HEK293 (cell line): ENCODE measurements at regions of chr2 and their contacts with region 1.

Region 1: DNA sequence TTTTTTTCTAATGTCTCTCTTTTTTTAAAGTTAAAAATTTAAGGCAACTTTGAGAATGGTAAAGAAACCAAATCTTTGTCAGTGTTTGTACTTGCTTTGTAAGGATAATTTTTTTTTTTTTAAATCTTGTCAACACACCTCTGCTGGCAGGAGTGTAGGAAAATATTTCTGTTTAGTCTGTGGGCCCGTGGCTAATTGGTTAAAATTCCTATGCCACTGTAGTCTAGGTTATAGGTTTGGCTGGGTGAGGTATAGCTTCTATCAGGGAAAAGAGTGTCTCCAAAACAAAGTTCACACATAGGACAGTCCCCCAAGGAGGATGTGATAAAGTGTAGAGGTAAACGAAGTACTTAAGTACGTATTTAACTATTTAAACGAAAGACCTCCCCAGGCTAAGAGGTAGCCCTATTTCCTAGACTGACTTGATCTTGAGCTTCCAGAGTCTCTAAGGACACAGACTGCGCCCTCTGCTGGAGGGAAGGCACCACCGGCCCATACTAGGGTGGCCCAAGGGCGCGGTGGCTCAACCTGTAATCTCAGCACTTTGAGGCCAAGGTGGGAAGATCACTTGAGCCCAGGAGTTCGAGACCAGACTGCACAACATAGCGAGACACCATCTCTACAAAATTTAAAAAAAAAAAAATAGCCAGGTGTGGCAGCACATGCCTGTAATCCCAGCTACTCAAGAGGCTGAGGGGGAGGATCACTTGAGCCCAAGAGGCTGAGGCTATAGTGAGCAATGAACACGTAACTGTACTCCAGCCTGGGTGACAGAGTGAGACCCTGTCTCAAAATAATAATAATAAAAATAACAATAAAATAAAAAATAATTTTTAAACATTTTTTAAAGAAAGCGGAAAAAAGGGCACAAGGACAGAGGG is 8.9 kb downstream of the TEX44 start:
- H3K4me3 ChIP-seq: no peak overlapping the region
- H3K27ac ChIP-seq: no peak overlapping the region
- H3K4me1 ChIP-seq: peaks cover 3% of the 10 kb centered on the region; the same call in 1 of the 2 replicates
- CTCF ChIP-seq: peak; percentile 90

Region 2: DNA sequence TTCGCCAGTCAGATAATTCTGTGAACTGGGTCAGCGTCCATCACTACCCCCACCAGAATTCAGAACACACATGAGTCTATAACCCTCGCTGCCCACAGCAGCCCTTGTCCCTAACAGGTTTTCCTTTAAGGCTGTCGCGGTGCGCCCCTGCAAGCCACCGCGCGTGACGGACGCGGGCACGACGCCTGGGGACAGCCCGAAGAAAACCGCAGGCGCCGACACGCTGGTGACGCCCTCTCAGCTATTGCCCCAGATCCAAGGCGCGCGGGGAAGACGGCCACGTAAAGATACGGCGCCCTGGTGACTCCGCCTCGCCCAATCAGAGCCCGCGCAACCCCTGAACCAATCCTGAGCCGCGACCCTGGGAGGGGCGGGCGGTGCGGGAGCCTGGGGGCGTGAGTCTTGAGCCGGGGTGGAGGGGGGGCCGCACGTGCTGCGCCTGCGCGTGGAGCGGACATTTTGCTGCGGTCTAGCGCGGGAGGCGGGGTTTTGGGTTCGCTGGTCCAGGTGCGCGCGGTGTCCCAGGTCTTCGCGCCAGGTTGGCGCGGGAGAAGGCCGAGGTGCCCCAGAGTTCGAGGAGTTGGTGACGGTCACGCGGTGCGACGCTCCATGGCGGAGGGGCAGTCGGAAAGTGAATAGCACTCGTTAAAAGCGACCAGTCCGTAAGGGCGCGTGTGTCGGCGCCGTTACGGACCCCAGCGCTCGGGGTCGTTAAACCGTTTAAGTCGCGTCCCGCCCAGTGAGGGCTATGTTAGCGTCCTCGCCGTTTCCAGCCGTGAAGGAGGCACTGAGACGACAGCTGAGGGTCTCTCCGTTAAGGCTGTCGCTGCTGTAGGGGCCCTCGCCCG is 87.3 kb before region 1 on chr2:
- CTCF ChIA-PET with region 1: interaction called, 14 read pairs
- POLR2A ChIA-PET with region 1: no interaction called
- H3K4me3 ChIP-seq: peak overlapping the region; percentile 51
- H3K27ac ChIP-seq: peak overlapping the region; percentile 47; the same call in 1 of the 2 replicates
- H3K4me1 ChIP-seq: no peaks in the 10 kb centered on the region; the same call in 1 of the 2 replicates
- CTCF ChIP-seq: no peak

Region 3: GRCh38 chr2:231563378-231563961 is 38.1 kb before region 1 on chr2:
- CTCF ChIA-PET with region 1: interaction called, 56 read pairs
- POLR2A ChIA-PET with region 1: no interaction called
- H3K4me3 ChIP-seq: no peak overlapping the region
- H3K27ac ChIP-seq: no peak overlapping the region
- H3K4me1 ChIP-seq: no peaks in the 10 kb centered on the region
- CTCF ChIP-seq: peak; percentile 39; the same call in 1 of the 2 replicates

Region 4: DNA sequence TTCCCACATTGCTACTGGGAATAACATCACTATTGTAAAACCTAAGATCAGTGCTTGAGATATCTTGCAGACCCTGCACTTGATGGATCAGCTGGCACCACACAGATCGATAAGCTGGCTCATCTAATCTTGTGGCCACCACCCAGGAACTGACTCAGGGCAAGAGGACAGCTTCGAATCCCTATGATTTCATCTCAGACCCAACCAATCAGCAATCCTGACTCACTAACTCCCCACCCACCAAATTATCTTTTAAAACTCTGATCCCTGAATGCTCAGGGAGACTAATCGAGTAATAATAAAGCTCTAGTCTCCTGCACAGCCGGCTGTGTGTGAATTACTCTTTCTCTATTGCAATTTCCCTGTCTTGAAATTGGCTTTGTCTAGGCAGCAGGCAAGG is 20.3 kb before region 1 on chr2:
- CTCF ChIA-PET with region 1: interaction called, 13 read pairs
- POLR2A ChIA-PET with region 1: no interaction called
- H3K4me3 ChIP-seq: no peak overlapping the region
- H3K27ac ChIP-seq: no peak overlapping the region
- H3K4me1 ChIP-seq: no peaks in the 10 kb centered on the region
- CTCF ChIP-seq: no peak

Region 5: GRCh38 chr2:231590619-231591018 is 11.0 kb before region 1 on chr2:
- CTCF ChIA-PET with region 1: interaction called, 44 read pairs
- POLR2A ChIA-PET with region 1: no interaction called
- H3K4me3 ChIP-seq: no peak overlapping the region
- H3K27ac ChIP-seq: no peak overlapping the region
- H3K4me1 ChIP-seq: no peaks in the 10 kb centered on the region
- CTCF ChIP-seq: no peak

Region 6: DNA sequence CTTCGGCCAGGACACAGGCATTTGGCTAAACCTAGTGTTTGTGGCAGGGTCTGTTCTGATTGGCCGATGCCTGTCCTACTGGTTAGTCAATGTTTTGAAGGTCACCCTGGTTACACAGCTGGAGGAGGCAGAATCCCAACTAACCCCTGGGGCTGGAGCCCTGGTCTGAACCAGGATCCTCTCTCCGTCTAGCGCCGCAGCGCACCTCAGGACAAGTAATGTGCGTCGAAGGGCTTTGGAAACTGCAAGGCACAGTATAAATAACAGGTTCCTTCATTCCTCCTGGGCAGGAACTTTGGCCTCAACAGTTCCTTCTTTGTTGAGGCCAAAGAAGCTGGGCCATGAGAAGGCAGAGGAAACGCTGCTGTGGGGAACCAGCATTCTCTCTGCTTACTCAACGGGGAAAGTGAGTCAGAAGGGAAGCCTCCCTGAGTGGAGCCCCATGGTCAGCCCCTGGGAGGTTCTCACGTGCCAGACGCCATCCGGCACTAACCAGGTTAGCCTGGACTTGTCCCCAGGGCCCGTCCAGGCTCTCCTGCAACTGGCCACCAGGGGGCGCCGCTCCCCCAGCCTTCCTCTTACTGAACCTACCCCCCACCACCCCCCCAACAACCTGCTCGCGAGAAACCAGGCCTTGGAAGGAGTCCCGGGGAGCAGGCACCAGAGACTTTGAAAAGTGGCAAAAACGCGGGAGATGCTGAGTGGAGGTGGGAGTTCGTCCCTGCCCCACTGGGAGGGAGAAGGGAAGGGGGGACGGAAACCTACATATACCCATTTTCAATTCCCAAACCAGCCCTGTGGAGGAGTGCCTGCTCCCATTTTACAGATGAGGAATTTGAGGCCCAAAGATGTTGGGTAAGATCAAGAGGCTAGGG is 10.8 kb after region 1 on chr2:
- CTCF ChIA-PET with region 1: interaction called, 24 read pairs
- POLR2A ChIA-PET with region 1: interaction called, 3 read pairs
- H3K4me3 ChIP-seq: no peak overlapping the region
- H3K27ac ChIP-seq: no peak overlapping the region
- H3K4me1 ChIP-seq: no peaks in the 10 kb centered on the region; the same call in 1 of the 2 replicates
- CTCF ChIP-seq: peak; percentile 93